ENCODE measurements at regions of chr22 and their contacts with region 1.

Region 1: DNA sequence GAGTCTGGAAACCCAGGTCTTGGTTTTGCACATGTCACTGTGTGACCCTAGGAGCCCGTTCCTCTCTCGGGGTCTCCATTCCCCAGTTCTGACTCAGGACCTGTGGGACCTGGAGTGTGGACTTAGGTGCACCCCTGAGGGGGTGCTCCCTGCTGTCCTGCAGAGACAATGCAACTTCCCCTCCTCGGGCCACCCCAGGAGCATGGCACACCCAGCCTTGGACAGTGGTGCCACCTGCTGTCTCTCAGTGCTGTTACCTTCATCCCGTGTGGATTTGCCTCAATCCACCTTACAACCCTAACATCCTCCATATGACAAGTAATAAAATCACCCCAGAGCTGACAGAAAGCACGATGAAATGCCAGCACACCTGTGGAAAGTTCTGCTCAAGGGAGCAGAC is 27.5 kb upstream of the CRYBB3 start:
- DNase-seq: peak; percentile 21
- ATAC-seq: peak; percentile 22; the same call in 1 of the 3 replicates
- H3K4me3 ChIP-seq: no peak overlapping the region
- H3K27ac ChIP-seq: no peak overlapping the region
- H3K4me1 ChIP-seq: peaks cover 35% of the 10 kb centered on the region
- H3K27me3 ChIP-seq: no peaks in the 10 kb centered on the region
- CTCF ChIP-seq: peak; percentile 71
- EP300 ChIP-seq: no peak
- POLR2A ChIP-seq: no peak
- RAD21 ChIP-seq: peak; percentile 79

Region 2: DNA sequence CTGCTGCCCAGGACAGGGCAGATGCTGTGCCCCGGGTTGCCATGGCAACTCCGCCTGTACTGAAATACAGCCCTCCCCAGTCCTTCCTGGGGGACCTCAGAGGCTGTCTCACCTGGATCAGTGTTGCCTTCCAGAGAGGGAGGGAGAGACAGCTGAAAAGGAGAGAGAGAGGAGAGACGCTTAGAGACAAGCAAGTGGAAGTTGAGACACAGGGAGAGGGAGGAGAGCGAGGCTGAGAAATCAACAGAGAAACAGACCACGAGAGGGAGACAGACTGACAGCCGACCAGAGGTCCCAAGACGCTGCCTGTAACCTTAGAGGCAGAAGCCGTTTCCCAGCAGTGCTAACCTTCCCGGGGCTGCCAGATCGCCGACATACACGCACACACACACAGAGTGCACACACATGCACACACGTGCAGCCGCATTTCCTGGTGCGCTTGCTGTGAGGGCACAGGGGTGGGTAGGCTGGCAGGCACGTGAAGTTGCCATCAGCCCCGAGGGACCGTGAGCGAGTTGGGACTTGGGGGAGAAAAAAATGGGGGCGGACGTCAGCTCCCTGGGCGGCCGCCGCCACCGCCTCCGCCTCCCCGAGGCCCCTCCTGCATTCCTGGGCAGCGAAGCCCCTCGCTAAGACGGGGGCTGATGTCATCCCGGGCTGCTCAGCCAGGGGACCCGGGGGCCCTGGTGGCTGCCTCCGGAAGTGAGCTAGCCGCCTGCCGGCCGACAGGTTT is 61.1 kb before region 1 on chr22:
- CTCF ChIA-PET with region 1: interaction called, 4 read pairs
- POLR2A ChIA-PET with region 1: interaction called, 14 read pairs
- in situ Hi-C with region 1: no loop called
- intact Hi-C with region 1: loop called (anchors 1 kb)
- DNase-seq: peak; percentile 91
- ATAC-seq: peak; percentile 81
- H3K4me3 ChIP-seq: peak overlapping the region; percentile 82 to 94 (median 84)
- H3K27ac ChIP-seq: peak overlapping the region; percentile 92
- H3K4me1 ChIP-seq: peaks cover 59% of the 10 kb centered on the region
- H3K27me3 ChIP-seq: no peaks in the 10 kb centered on the region; a peak in 1 of 5 replicates
- CTCF ChIP-seq: peak; percentile 79
- EP300 ChIP-seq: 0 out of 4 replicates have a peak, but pooled peaks of 1 of the 2 experiments have one; percentile 1
- POLR2A ChIP-seq: peak; percentile 29 to 30; a peak in 1 of 4 replicates
- RAD21 ChIP-seq: no peak; the same call in 1 of the 2 replicates

Region 3: GRCh38 chr22:25193548-25193947 is 21.4 kb after region 1 on chr22:
- CTCF ChIA-PET with region 1: no interaction called
- POLR2A ChIA-PET with region 1: no interaction called
- in situ Hi-C with region 1: no loop called
- intact Hi-C with region 1: no loop called
- DNase-seq: no peak
- ATAC-seq: no peak
- H3K4me3 ChIP-seq: no peak overlapping the region
- H3K27ac ChIP-seq: no peak overlapping the region
- H3K4me1 ChIP-seq: no peaks in the 10 kb centered on the region
- H3K27me3 ChIP-seq: no peaks in the 10 kb centered on the region
- CTCF ChIP-seq: no peak
- EP300 ChIP-seq: no peak
- POLR2A ChIP-seq: no peak
- RAD21 ChIP-seq: no peak

Measured in HepG2 (cell line).